Natural killer cell (primary cell): ENCODE measurements at regions of chr6 and their contacts with region 1.

Region 1: DNA sequence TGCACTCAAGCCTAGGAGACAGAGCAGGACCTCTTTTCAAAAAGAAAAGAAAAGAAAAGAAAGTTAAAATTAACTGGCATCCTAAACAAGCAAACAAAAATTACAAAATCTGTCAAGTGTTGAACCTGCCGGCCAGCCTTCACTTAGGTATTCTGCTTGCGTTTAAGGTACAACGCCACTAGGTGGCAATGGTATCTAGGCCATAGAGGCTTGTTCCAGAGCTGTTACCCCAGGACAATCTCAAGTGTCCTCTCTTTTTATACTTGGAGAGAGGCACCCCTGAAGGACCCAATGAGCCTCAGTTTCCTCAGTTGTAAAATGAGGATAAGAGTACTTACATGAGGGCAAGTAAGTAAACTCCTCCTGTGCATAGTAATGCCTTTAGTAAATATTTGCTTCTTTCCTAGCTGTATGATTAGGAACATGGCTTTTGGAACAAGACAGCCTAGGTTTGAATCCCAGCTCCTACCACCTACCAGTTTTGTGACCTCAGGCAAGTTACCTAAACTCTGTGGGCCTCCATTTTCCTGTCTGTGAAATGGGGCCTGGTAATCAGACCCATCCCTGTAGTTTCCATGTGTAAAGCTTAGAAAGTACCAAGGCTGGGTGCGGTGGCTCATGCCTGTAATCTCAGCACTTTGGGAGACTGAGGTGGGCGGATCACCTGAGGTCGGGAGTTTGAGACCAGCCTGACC is 5.8 kb upstream of the PACSIN1 start:
- DNase-seq: peak; percentile 30 to 78
- ATAC-seq: peak; percentile 66 to 88 (median 85)
- H3K4me3 ChIP-seq: no peak overlapping the region
- H3K4me3 Mint-ChIP-seq: no peak overlapping the region
- H3K27ac ChIP-seq: no peak overlapping the region
- H3K27ac Mint-ChIP-seq: no peak overlapping the region
- H3K4me1 ChIP-seq: peaks cover 1% of the 10 kb centered on the region
- H3K4me1 Mint-ChIP-seq: peaks cover 0 to under 1% of the 10 kb centered on the region in 2 donors
- H3K27me3 ChIP-seq: no peaks in the 10 kb centered on the region
- H3K27me3 Mint-ChIP-seq: peaks cover 7 to 13% of the 10 kb centered on the region in 2 donors
- CTCF ChIP-seq: peak; percentile 72

Region 2: DNA sequence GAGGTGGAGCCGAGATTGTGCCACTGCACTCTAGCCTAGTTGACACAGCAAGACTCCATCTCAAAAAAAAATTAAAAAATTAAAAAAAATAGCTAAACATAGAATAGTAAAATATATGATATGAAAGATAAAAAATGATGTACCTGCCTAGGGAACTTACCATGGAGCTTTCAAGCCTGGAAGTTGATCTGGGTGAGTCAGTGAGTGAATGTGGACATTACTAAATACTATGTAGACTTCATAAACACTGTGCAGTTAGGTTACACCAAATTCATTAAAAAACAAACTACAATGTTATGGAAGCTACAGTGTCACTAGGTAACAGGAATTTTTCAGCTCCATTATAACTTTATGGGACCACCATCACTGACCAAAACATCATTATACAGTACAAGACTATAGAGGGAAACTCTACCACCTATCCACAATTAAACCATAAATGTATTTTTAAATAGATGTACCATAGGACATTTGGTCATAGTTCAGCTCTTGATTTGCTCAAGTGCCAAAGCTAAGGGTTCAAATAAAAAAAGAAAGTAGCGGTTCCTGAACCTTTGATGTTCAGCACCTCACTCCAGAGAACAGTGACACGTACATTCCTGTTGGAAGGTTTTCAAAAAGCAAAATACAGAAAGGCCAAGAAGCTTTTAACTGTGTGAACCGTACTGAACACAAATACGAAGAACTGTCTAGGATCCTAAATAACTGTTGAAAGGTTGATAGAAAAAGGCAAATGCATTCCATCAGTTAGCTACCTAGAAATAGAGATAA is 148.5 kb after region 1 on chr6:
- intact Hi-C with region 1: loop called (anchors 1 kb)
- DNase-seq: no peak
- ATAC-seq: no peak
- H3K4me3 ChIP-seq: no peak overlapping the region
- H3K4me3 Mint-ChIP-seq: no peak overlapping the region
- H3K27ac ChIP-seq: no peak overlapping the region
- H3K27ac Mint-ChIP-seq: peak overlapping the region in 1 of 2 donors; percentile 29
- H3K4me1 ChIP-seq: no peaks in the 10 kb centered on the region
- H3K4me1 Mint-ChIP-seq: peaks cover 17 to 31% of the 10 kb centered on the region in 2 donors
- H3K27me3 ChIP-seq: no peaks in the 10 kb centered on the region
- H3K27me3 Mint-ChIP-seq: no peaks in the 10 kb centered on the region
- CTCF ChIP-seq: no peak

Region 3: GRCh38 chr6:35014801-35015200 is 554.8 kb after region 1 on chr6:
- intact Hi-C with region 1: no loop called
- DNase-seq: no peak
- ATAC-seq: no peak
- H3K4me3 ChIP-seq: no peak overlapping the region
- H3K4me3 Mint-ChIP-seq: no peak overlapping the region
- H3K27ac ChIP-seq: no peak overlapping the region
- H3K27ac Mint-ChIP-seq: no peak overlapping the region
- H3K4me1 ChIP-seq: no peaks in the 10 kb centered on the region
- H3K4me1 Mint-ChIP-seq: no peaks in the 10 kb centered on the region
- H3K27me3 ChIP-seq: no peaks in the 10 kb centered on the region
- H3K27me3 Mint-ChIP-seq: no peaks in the 10 kb centered on the region
- CTCF ChIP-seq: no peak

Region 4: GRCh38 chr6:35139908-35140655 is 680.0 kb after region 1 on chr6:
- intact Hi-C with region 1: loop called (anchors 1 kb)
- DNase-seq: peak; percentile 24 to 83
- ATAC-seq: peak in 2 of 3 donors; percentile 36 to 57
- H3K4me3 ChIP-seq: no peak overlapping the region
- H3K4me3 Mint-ChIP-seq: peak overlapping the region; percentile 71
- H3K27ac ChIP-seq: no peak overlapping the region
- H3K27ac Mint-ChIP-seq: peak overlapping the region in 1 of 2 donors; percentile 83
- H3K4me1 ChIP-seq: peaks cover 11% of the 10 kb centered on the region
- H3K4me1 Mint-ChIP-seq: peaks cover 11 to 17% of the 10 kb centered on the region in 2 donors
- H3K27me3 ChIP-seq: peaks cover 2% of the 10 kb centered on the region
- H3K27me3 Mint-ChIP-seq: peaks cover 14 to 27% of the 10 kb centered on the region in 2 donors
- CTCF ChIP-seq: peak; percentile 87

Region 5: DNA sequence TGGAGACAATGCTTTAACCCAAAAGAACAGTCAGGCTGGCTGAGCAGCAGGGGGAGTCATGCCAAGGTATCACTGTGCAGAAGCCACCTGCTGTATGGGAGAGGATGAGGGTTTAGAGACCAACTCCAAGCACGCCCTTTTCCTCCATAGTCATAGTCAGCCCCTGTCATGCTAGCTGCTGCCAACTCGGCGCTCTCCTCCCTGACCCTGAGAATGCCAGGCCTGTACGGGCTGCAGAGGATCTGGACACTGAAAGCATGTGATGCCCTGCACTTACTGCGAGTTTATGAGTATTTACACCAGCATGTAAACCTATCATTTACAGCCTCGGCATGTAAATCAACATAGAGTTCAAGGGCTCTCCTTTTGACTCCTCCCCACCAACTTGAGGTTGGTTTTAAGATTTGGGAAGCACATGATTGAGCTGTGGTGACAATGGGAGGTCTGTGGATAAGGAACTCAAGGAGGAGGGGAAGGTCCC is 742.1 kb after region 1 on chr6:
- intact Hi-C with region 1: loop called (anchors 10 kb)
- DNase-seq: no peak
- ATAC-seq: no peak
- H3K4me3 ChIP-seq: no peak overlapping the region
- H3K4me3 Mint-ChIP-seq: no peak overlapping the region
- H3K27ac ChIP-seq: no peak overlapping the region
- H3K27ac Mint-ChIP-seq: no peak overlapping the region
- H3K4me1 ChIP-seq: no peaks in the 10 kb centered on the region
- H3K4me1 Mint-ChIP-seq: no peaks in the 10 kb centered on the region
- H3K27me3 ChIP-seq: peaks cover 4% of the 10 kb centered on the region
- H3K27me3 Mint-ChIP-seq: peaks cover 19 to 69% of the 10 kb centered on the region in 2 donors
- CTCF ChIP-seq: no peak

Region 6: DNA sequence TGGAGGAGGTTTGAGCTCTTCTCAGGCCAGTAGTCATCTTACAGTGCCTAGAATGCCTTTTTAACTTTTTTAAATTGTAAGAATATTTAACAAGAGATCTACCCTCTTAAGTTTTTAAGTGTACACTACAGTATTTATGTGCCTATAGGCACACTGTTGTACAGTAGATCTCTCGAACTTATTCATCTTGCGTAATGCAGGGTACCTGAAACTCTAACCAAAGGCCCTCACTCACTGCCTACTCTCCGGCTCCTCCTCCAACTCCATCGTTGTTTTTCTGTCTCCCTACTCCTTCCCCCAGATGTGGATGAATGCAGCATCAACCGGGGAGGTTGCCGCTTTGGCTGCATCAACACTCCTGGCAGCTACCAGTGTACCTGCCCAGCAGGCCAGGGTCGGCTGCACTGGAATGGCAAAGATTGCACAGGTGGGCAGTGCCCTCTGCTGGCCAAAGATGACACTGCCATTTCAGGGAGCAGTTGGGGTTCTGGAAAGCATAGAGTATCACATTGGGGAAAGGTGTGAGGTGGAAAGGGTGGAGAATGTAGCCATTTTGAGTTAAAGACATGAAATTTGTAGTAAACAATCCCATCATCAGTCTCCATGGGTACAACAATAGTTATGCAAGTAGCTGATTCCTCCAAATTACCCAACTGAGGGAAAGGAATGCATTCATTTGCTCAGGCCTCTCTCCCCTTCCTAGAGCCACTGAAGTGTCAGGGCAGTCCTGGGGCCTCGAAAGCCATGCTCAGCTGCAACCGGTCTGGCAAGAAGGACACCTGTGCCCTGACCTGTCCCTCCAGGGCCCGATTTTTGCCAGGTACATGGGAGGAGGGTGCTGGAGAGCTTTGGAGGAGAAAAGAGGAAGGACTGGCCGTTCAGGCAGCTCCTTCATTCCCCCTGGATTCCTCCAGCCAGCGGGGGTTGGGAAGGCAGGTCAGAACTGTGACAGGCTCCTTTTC is 781.1 kb after region 1 on chr6:
- intact Hi-C with region 1: loop called (anchors 5 kb)
- DNase-seq: peak; percentile 66 to 81
- ATAC-seq: peak; percentile 77 to 93 (median 91)
- H3K4me3 ChIP-seq: no peak overlapping the region
- H3K4me3 Mint-ChIP-seq: no peak overlapping the region
- H3K27ac ChIP-seq: no peak overlapping the region
- H3K27ac Mint-ChIP-seq: peak overlapping the region in 1 of 2 donors; percentile 25
- H3K4me1 ChIP-seq: no peaks in the 10 kb centered on the region
- H3K4me1 Mint-ChIP-seq: peaks cover 6 to 20% of the 10 kb centered on the region in 2 donors
- H3K27me3 ChIP-seq: no peaks in the 10 kb centered on the region
- H3K27me3 Mint-ChIP-seq: no peaks in the 10 kb centered on the region
- CTCF ChIP-seq: peak; percentile 95